ENCODE measurements at regions of chr1 and their contacts with region 1.

Region 1: DNA sequence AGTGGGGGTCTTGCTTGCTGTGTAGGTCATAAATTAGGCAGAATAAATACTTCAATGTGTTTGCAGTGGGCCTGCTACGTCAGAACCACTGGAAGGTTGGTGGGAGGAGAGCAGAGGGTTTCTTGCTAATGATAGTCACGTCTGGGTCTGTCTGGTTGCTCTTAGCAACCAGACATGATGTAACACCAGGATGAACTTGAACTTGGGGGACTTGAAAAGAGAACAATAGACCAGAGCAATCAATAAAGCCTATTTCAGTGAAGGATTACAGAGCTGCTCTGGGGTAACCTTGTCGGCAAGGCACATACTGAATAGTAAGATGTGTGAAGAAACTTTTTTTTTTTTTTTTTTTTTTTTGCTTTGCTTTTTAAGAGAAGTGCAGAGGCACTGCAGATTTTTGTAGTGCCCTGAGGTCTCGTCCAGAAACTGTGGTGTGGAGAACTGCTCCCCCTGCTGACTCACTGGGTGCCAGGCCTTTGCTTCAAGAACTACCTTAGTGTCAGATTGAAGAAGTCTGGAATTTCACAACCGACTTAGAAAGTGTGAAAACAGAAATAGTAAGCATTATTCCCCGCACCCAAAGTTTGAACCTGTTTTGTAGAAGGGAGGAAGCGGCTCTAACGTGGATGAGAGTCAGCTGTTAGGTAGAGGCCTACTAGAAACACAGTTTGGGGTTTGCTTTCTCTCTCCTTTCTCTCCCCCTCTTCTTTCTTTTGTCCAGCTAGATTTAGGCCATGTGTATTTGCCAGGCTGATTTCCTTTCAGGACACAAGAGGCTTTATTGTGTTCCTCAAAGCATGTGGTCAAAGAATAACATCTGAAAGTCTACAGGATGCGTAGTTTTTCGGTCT is 271.6 kb downstream of the TM2D1 start:
- DNase-seq: peak; percentile 81
- ATAC-seq: peak; percentile 93
- H3K4me3 Mint-ChIP-seq: peak overlapping the region; percentile 13
- H3K27ac Mint-ChIP-seq: no peak overlapping the region
- H3K4me1 Mint-ChIP-seq: peaks cover 11% of the 10 kb centered on the region
- H3K27me3 Mint-ChIP-seq: no peaks in the 10 kb centered on the region

Region 2: DNA sequence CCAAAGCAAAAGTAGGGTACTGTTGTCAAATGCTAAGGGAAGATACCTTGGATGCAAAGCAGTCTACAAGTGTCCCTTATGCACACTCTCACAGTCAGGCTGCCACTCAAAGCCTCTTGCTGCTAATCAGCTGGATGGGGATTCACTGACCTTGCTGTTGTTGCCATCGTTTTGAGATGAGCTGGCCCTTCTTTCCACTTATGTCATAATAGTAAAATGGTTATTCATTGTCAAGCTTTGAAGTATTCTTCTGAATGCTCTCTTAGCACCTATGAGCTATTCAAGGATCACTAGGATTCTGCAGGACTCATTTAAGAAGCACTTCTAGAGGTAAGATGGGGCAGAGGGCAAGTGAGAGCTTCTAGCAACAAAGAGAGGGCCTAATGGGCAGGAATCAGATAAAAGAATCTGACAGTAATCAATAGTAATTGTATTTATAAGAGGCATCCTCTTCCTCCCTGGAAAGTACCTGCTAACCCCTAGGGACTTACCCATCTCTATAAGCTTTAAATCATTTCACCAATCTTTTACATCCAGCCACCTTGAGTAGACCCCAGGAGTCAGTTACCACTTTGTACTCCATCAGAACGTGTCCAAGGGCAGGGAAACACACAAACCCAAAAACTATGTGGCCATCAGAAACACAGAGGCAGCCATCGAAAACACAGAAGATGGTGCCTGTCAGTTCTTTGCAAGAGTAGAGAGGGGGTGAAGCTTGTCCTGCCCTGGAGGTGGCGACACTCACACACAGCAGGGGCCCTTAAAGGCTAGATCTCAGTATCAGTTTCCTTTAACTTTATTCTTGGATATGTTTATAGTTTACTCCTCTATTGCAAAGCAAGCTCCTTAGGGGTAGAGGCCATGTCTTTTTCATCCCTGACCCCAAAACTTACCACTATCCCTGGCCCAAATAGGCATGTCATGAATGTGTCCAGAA is 474.6 kb before region 1 on chr1:
- CTCF ChIA-PET with region 1: interaction called, 10 read pairs
- DNase-seq: peak; percentile 66
- ATAC-seq: peak; percentile 84
- H3K4me3 Mint-ChIP-seq: no peak overlapping the region
- H3K27ac Mint-ChIP-seq: no peak overlapping the region
- H3K4me1 Mint-ChIP-seq: peaks cover 3% of the 10 kb centered on the region
- H3K27me3 Mint-ChIP-seq: peaks cover 7% of the 10 kb centered on the region

Region 3: GRCh38 chr1:61318319-61319125 is 134.8 kb before region 1 on chr1:
- CTCF ChIA-PET with region 1: no interaction called
- DNase-seq: peak; percentile 60
- ATAC-seq: peak; percentile 99
- H3K4me3 Mint-ChIP-seq: peak overlapping the region; percentile 56
- H3K27ac Mint-ChIP-seq: peak overlapping the region; percentile 75
- H3K4me1 Mint-ChIP-seq: peaks cover 49% of the 10 kb centered on the region
- H3K27me3 Mint-ChIP-seq: no peaks in the 10 kb centered on the region

Region 4: GRCh38 chr1:61428146-61428545 is 25.2 kb before region 1 on chr1:
- CTCF ChIA-PET with region 1: no interaction called
- DNase-seq: no peak
- ATAC-seq: no peak
- H3K4me3 Mint-ChIP-seq: no peak overlapping the region
- H3K27ac Mint-ChIP-seq: no peak overlapping the region
- H3K4me1 Mint-ChIP-seq: no peaks in the 10 kb centered on the region
- H3K27me3 Mint-ChIP-seq: no peaks in the 10 kb centered on the region

Region 5: GRCh38 chr1:61441723-61442262 is 11.5 kb before region 1 on chr1:
- CTCF ChIA-PET with region 1: no interaction called
- DNase-seq: no peak
- ATAC-seq: no peak
- H3K4me3 Mint-ChIP-seq: no peak overlapping the region
- H3K27ac Mint-ChIP-seq: no peak overlapping the region
- H3K4me1 Mint-ChIP-seq: no peaks in the 10 kb centered on the region
- H3K27me3 Mint-ChIP-seq: no peaks in the 10 kb centered on the region

Region 6: DNA sequence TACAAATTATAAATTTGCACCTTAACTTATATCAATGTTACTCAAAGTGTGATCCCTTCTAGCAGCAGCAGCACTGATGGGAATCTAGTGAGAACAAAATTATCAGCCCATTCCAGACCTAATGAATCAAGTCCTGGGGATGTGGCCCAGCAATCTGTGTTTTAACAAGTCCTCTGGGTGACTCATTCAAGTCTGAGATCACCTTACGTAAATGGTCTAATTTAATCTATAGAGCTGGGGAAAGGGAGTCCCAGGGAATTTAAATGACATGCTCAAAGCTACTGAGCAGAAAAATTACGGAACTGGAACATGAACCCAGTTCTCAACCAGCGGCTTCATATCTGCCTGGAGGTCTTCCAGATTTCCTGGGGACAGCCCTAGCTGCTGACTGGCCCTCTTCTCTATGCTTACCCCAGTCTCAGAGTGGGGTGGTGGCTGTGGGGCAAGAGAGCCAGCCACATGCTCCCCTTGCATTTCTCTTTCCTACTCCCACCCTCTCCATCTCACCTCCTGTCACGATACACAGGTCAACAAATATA is 51.6 kb after region 1 on chr1:
- CTCF ChIA-PET with region 1: no interaction called
- DNase-seq: no peak
- ATAC-seq: no peak
- H3K4me3 Mint-ChIP-seq: no peak overlapping the region
- H3K27ac Mint-ChIP-seq: no peak overlapping the region
- H3K4me1 Mint-ChIP-seq: no peaks in the 10 kb centered on the region
- H3K27me3 Mint-ChIP-seq: peaks cover 14% of the 10 kb centered on the region

Region 7: GRCh38 chr1:61588736-61589672 is 135.7 kb after region 1 on chr1:
- CTCF ChIA-PET with region 1: interaction called, 11 read pairs
- DNase-seq: peak; percentile 78
- ATAC-seq: peak; percentile 97
- H3K4me3 Mint-ChIP-seq: no peak overlapping the region
- H3K27ac Mint-ChIP-seq: no peak overlapping the region
- H3K4me1 Mint-ChIP-seq: no peaks in the 10 kb centered on the region
- H3K27me3 Mint-ChIP-seq: peaks cover 29% of the 10 kb centered on the region